ENCODE measurements at regions of chr16 and their contacts with region 1.

Region 1: DNA sequence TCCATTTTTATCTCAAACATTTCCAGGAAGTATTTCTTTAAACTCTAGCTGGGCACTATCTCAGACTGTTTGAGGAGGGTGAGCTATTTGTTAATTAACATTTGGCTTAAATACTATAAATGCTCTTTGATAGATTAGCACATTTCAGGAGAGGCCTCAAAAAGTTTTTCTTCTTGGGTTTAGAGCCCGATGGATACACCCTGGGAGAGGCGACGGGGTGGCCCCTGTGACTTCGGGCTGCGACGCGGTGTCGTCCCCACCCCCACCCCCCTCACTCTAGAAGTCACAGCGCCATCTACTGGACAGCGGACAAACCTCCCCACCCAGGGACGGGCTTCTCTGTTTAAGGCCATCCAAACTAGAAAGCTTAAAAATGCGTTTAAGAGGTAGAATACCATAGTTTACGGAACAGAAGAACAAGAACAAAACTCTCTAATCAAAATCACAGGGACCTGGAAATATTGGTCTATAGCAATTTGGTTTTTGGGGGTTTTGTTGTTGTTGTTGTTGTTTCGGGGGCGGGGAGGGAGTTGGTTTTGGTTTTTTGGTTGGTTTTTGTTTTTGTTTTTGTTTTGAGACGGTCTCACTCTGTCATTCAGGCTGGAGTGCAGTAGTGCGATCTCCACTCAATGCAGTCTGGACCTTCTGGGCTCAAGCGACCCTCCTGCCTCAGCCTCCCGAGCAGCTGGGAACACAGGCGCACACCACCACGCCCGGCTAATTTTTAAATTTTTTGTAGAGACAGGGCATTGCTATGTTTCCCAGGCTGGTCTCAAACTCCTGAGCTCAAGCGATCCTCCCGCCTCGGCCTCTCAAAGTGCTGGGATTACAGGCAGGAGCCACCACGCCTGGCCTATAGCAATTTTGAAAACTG is 254.4 kb downstream of the C16orf95 start:
- DNase-seq: peak; percentile 83
- ATAC-seq: peak; percentile 66
- H3K4me3 Mint-ChIP-seq: no peak overlapping the region
- H3K27ac Mint-ChIP-seq: no peak overlapping the region
- H3K4me1 Mint-ChIP-seq: no peaks in the 10 kb centered on the region
- H3K27me3 Mint-ChIP-seq: peaks cover 51% of the 10 kb centered on the region

Region 2: DNA sequence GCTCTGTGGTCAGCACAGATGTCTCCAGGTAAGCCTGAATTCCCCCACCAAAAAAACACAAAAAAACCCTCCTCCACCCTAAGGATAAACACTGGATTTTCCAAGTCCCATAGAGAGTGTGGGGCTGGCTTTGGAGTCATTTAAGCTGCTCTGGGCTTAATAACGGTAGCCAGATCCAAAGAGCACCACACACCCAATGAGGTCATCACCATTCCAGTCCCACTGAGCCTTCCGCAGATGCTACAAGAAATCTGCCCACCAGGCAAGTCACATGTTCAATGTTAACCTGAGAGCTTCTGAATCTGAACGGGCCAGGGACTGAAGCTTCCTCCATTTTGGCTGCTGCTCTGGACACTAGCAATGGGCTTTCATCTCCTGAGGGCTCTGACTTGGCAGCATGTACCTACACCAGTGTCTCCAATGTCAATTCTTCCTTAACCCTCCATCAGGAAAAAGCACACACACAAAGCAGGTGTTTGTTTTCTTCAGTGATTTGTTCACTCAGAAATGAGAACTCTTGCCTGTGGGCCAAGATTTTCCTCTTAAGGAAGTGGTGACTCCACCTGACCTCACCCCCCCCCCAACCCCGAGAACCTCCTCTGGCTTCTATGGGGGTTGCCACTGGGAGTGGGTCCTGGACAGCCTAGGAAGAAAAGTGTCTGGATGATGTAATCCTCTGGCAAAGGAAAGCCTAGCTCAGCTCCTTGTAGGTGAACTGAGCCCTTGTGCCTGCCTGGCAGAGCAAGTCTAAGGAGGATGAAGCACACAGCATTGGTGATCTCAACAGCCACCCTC is 264.4 kb before region 1 on chr16:
- CTCF ChIA-PET with region 1: no interaction called
- POLR2A ChIA-PET with region 1: no interaction called
- intact Hi-C with region 1: no loop called
- DNase-seq: no peak
- ATAC-seq: no peak
- H3K4me3 Mint-ChIP-seq: no peak overlapping the region
- H3K27ac Mint-ChIP-seq: no peak overlapping the region
- H3K4me1 Mint-ChIP-seq: no peaks in the 10 kb centered on the region
- H3K27me3 Mint-ChIP-seq: peaks cover 24% of the 10 kb centered on the region

Region 3: GRCh38 chr16:86874141-86874540 is 188.7 kb before region 1 on chr16:
- CTCF ChIA-PET with region 1: interaction called, 5 read pairs
- POLR2A ChIA-PET with region 1: no interaction called
- intact Hi-C with region 1: loop called in 1 of 2 experiments (anchors 5 kb)
- DNase-seq: peak; percentile 62
- ATAC-seq: no peak
- H3K4me3 Mint-ChIP-seq: no peak overlapping the region
- H3K27ac Mint-ChIP-seq: no peak overlapping the region
- H3K4me1 Mint-ChIP-seq: no peaks in the 10 kb centered on the region
- H3K27me3 Mint-ChIP-seq: peaks cover 24% of the 10 kb centered on the region

Region 4: DNA sequence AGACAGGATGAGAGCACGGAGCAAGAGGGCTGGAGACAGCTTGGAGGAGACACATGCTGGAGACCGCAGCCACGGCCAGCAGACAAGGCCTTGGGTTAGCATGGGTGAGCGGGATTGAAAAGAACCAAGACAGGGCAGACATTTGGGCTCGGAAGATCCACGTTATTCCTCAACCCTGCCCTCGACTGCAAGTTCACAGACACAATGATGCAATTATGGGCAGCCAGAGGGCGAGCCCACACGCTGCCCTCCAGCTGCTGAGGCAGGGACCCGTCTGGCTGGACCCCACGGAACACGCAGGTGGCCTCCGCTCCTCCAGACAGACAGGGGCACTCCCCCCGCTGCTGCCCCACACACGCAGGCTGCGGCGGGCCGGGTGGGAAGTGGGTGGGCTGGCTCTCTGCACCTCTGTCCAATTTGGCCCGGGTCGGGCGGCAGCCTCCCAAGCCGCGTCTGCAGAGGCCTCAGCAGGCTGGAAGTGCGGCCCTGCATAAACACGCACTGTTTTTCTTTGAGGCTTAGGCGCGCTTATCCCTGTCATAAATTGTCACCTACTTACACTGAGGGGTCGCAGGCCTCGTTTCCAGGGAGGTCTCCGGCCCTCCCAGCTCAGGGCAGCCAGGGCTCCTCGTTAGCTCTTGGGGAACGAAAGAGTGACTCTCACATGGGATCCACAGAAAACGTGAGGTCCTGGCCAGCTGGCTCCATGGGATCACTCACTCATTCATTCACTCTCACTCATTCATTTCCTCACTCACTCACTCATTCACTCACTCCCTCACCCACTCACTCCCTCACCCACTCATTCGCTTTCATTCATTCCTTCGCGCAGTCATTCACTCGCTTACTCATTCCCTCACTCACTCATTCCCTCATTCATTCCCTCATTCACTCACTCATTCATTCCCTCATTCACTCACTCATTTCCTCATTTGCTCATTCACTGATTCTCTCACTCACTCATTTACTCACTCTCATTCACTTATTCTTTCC is 49.6 kb before region 1 on chr16:
- CTCF ChIA-PET with region 1: no interaction called
- POLR2A ChIA-PET with region 1: no interaction called
- intact Hi-C with region 1: no loop called
- DNase-seq: no peak
- ATAC-seq: no peak
- H3K4me3 Mint-ChIP-seq: no peak overlapping the region
- H3K27ac Mint-ChIP-seq: no peak overlapping the region
- H3K4me1 Mint-ChIP-seq: no peaks in the 10 kb centered on the region
- H3K27me3 Mint-ChIP-seq: peaks cover 15% of the 10 kb centered on the region

Region 5: DNA sequence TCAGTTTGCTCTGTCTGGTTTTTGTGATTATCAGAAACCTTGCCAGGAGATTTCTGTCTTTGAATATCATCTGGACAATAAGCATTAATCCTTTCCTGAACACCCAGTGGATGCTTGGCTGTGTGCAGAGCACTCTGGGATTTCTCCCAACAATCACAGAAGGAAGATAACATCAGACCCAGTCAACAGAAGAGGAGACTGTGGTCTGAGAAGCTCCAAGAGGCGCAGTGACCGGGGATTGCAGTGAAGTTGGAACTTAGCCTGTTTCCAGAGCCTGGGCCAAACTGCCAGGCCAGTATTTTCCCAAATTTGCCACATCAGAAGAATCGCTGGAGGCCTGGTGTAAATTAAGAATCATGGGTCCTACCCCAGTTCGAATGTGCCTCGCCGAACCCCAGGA is 10.3 kb before region 1 on chr16:
- CTCF ChIA-PET with region 1: interaction called, 19 read pairs
- POLR2A ChIA-PET with region 1: no interaction called
- intact Hi-C with region 1: no loop called
- DNase-seq: no peak
- ATAC-seq: no peak
- H3K4me3 Mint-ChIP-seq: no peak overlapping the region
- H3K27ac Mint-ChIP-seq: no peak overlapping the region
- H3K4me1 Mint-ChIP-seq: no peaks in the 10 kb centered on the region
- H3K27me3 Mint-ChIP-seq: peaks cover 16% of the 10 kb centered on the region

Region 6: GRCh38 chr16:87108941-87109340 is 46.1 kb after region 1 on chr16:
- CTCF ChIA-PET with region 1: no interaction called
- POLR2A ChIA-PET with region 1: no interaction called
- intact Hi-C with region 1: no loop called
- DNase-seq: no peak
- ATAC-seq: no peak
- H3K4me3 Mint-ChIP-seq: no peak overlapping the region
- H3K27ac Mint-ChIP-seq: no peak overlapping the region
- H3K4me1 Mint-ChIP-seq: no peaks in the 10 kb centered on the region
- H3K27me3 Mint-ChIP-seq: peaks cover 10% of the 10 kb centered on the region

Region 7: GRCh38 chr16:87278191-87279095 is 215.6 kb after region 1 on chr16:
- CTCF ChIA-PET with region 1: interaction called, 4 read pairs
- POLR2A ChIA-PET with region 1: no interaction called
- intact Hi-C with region 1: loop called in 1 of 2 experiments (anchors 2 kb)
- DNase-seq: peak; percentile 76
- ATAC-seq: peak; percentile 70
- H3K4me3 Mint-ChIP-seq: no peak overlapping the region
- H3K27ac Mint-ChIP-seq: no peak overlapping the region
- H3K4me1 Mint-ChIP-seq: no peaks in the 10 kb centered on the region
- H3K27me3 Mint-ChIP-seq: peaks cover 5% of the 10 kb centered on the region

Region 8: GRCh38 chr16:87431926-87432325 is 369.1 kb after region 1 on chr16:
- CTCF ChIA-PET with region 1: no interaction called
- POLR2A ChIA-PET with region 1: no interaction called
- intact Hi-C with region 1: no loop called
- DNase-seq: no peak
- ATAC-seq: no peak
- H3K4me3 Mint-ChIP-seq: no peak overlapping the region
- H3K27ac Mint-ChIP-seq: no peak overlapping the region
- H3K4me1 Mint-ChIP-seq: peaks cover 19% of the 10 kb centered on the region
- H3K27me3 Mint-ChIP-seq: no peaks in the 10 kb centered on the region